HCT116 (cell line): ENCODE measurements at regions of chr17 and their contacts with region 1.

Region 1: DNA sequence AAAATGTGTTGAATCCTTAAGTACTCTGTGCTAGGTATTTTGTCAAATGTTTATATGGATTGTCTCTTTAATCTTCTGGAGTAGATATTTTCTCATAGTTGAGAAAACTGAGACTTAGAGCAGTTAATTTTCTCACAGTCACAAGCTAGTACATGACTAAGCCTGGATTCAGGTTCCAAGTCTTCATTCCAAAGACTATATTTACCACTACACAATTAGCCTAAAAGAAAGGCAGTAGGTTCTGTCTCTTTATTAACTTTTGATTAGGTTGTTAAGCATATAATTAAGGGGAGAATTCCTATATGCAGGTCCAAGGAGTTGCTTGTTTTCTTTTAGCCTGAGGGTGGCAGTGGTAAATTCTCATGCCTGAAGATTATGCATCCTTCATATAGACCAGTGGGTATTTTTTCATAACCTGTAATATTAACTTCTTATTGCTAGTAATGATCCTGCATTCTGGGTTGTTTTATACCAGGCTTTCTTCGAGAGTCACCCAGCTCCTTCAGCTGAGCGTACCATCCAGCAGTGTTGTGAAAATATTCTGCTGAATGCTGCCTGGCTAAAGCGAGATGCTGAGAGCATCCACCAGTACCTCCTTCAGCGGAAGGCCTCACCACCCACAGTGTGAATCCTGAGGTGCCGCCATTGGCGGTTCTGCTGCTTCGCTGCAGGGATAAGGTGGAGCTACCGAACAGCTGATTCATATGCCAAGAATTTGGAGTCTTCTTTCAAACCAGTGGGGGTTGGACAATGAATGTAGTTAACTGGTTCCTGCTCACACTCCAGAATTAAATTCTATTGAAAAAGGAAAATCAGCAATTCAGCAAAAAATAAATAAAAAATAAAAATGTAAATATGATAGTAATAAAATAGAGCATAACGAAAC is 28.2 kb upstream of the KPNB1 start:
- DNase-seq: peak; percentile 82
- ATAC-seq: peak; percentile 93
- H3K4me3 ChIP-seq: peak overlapping the region in 1 of 2 experiments; percentile 22; a peak in 1 of 4 replicates
- H3K27ac ChIP-seq: peak overlapping the region; percentile 62
- H3K4me1 ChIP-seq: peaks cover 32 to 46% of the 10 kb centered on the region in 2 experiments
- H3K27me3 ChIP-seq: no peaks in the 10 kb centered on the region
- CTCF ChIP-seq: peak in 2 of 3 experiments; percentile 22 to 27; a peak in 3 of 6 replicates
- POLR2A ChIP-seq: no peak
- RAD21 ChIP-seq: 0 out of 2 replicates have a peak, but pooled peaks have one; percentile 15

Region 2: DNA sequence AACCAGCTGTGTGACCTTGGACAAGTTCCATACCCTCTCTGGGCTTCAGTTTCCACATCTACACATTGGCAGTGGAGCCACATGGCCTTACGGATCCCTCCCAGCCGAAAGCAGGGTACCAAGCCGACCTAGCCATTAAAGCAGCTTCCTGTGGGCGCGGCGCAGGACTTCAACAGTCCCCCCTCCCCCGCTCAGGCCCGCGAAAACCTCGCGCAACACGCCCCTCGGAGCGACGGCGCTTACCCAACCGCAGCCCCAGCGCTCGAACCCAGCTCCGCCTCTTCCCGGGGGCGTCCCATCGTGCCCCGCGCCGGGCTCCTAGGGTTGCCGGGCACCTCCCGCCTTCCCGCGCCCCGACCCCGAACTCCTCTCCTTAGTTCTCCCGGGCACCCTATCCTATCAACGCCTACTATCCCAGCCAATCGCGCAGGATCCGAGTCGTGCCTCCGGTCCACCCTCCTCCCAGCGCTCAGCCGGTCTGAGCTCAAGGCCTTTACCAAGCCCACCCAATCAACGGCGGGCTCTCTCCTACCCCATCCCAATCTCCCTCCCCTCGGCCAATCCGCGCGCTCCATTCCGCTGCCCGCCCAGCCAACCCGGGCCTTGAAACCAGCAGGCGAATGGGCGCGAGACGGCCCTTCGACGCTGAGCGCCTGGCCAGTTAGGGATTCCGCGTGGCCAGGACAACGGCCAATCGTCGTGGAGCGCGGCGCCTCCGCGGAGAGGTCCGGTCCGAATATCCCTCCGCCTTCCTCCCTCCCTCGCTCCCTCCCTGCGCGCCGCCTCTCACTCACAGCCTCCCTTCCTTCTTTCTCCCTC is 27.8 kb after region 1 on chr17 and contains the start of gene KPNB1:
- CTCF ChIA-PET with region 1: interaction called, 8 read pairs
- POLR2A ChIA-PET with region 1: interaction called, 18 read pairs
- RAD21 ChIA-PET with region 1: interaction called in 1 of 2 experiments, 4 read pairs
- intact Hi-C with region 1: no loop called
- DNase-seq: peak; percentile 100
- ATAC-seq: peak; percentile 86
- H3K4me3 ChIP-seq: peak within 1 kb of the TSS; percentile 78 to 83
- H3K27ac ChIP-seq: peak within 1 kb of the TSS; percentile 92
- H3K4me1 ChIP-seq: peaks cover 14 to 21% of the 10 kb centered on the region in 2 experiments; a peak in 3 of 4 replicates
- H3K27me3 ChIP-seq: no peaks in the 10 kb centered on the region
- CTCF ChIP-seq: no peak
- POLR2A ChIP-seq: peak; percentile 79
- RAD21 ChIP-seq: no peak
- total RNA-seq, gene KPNB1: 526 TPM